Right ventricle myocardium inferior (tissue), 1 donor: ENCODE measurements at regions of chr2 and their contacts with region 1.

Region 1: DNA sequence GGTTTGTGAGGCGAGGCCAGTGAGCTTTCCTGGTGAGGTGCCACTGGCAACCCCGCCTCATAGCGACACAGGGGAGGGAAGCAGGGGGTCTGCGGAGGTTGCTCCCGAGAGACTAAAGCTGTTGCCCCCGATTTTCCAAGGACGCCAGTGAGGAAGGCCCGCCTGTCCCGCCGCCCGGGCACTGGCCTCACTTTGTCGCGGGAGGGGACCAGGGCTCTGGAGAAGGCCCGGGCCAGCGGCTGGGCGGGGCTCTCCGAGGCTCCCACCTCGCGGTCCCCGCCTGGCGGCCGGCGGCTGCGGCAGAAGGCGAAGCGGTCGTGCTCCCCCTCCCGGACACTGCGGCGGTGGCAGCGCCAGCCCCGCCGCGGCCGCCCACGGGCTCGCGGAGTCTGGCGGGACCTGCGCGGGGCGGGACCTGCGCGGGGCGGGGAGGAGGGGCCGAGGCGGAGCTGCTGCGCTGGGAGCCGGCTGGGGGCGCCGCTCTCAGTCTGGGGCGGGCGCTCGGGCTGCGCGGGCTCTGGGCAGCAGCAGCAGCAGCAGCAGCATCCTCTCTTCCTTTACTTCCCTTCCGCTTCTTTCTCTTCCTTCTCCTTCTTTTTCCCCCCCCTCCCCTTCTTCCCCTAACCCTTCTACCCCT is at the start of gene MAP2:
- DNase-seq: peak; percentile 87
- ATAC-seq: peak; percentile 99
- total RNA-seq, gene MAP2: 4.1 TPM

Region 2: DNA sequence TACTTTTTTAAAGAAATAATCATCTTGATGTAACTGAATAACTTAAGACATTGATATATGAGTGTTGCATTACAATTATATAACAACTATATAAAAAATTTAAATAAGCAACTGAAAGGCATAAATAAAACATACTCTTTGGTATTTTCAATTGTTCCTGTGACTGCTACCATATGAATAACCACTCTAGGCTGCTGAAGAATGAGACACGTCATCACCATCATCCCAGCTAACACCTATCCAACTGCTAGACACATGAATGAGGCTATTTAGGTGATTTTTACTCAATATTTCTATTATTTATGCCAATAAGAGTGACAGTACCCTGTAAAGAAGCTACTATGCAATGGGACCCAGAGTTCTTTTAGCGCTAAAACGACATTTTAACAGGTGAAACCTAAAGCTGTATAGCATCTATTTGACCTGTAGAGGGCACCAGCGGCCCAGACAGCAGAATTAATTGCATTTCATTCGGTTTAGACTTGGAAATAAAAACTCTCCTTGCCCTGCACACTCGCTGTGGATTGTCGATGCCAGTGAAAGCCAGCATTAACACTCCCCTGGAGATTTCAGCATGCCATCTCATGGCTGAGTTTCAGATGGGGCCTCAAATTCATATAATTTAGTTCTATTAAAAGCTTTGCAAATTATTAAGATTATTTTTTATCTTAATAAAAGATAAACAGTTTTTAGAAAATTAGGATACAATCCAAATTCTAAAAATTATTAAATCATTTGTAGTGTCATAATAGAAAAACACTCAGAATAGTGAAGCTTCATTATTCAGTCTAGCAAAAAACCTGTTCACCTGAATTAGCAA is 89.3 kb before region 1 on chr2:
- intact Hi-C with region 1: loop called (anchors 2 kb)
- DNase-seq: no peak
- ATAC-seq: no peak

Region 3: DNA sequence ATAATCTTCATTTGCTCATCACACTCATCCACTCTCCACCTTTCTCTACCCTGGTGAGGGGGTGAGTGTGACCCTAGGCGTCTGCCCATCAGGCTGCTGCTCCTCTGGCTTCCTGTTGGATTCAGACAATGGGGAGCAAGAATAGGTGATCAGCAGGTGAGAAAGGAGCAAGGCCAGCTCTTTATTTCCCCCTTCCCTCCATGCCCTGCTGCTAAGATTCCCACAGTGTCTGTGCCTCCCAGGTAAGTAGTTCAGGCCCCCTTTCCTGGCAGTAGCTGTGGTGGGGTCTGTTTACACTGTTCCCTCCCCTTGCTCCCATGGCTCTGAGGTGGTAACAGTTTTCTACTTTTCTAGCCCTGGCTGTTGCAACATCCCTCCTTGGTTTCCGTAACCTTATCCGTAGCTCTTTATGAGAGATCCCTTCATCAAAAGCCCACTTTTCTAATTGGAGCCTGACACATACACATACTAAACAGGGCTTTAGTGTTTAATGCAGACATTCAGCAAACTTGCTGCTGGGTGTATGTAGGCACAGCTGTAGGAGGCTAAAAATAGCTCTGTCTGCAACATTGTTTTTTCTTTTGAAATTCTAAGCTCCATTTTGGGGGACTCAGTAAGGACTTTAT is 27.6 kb after region 1 on chr2:
- intact Hi-C with region 1: no loop called
- DNase-seq: no peak
- ATAC-seq: no peak

Region 4: DNA sequence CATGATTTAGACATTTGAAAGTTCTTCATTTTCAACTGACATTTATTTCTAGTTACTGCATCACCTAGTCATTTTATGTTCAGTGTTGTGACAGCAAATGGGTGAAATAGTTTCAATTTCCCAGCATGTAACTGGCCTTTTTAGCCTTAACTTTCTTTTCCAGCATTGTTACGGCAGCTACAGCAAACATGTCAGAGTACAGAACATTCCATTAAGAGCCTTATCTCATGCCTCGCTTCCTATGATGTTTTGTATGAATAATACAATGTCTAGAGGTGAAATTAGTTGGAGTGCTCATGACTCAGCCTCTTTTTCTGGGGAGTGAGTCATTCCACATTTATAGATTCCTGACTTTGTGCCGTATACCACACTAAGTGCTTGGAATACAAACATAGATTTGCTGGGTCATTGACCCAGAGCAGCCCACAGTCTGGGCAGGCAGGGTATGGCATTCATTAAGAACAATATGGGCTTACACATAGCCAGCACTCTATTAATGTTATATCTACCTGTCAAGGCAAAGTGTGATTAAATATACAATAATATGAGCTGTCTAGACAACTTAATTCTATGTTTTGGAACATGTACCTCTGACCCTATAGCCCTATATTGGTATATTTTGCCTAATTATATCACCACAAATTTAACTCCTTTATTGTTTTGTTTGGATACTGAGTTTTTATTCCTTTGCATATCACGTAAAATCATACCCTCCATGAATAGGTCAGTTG is 72.3 kb after region 1 on chr2:
- intact Hi-C with region 1: no loop called
- DNase-seq: no peak
- ATAC-seq: peak; percentile 86

Region 5: DNA sequence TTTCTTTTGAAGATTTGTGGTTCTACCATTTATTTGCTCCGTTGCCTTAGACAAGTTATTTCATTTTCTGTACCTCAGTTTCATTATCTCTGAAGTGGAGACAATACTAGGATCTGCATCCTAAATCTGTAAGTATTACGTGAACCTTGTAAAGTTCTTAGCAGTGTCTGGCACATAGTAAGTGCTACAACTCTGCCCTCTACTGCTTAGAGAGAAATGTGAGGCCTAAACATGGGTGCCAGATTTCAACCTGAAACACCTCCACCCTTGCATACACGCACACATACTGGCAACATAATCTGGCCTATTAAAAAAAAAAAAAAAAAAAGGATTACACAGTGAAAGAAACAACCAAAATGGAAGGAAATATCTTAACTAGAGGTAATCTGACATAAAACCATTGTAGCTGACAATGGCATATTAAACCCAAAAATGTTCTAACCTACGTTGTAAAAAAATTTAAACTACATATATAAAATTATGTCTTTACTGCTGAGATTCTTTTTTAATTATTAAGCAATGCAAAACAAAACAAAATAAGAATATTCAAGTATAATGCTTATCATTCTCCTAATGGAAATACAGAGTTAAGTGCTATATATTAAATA is 132.8 kb after region 1 on chr2:
- intact Hi-C with region 1: loop called (anchors 2 kb)
- DNase-seq: no peak
- ATAC-seq: no peak

Region 6: DNA sequence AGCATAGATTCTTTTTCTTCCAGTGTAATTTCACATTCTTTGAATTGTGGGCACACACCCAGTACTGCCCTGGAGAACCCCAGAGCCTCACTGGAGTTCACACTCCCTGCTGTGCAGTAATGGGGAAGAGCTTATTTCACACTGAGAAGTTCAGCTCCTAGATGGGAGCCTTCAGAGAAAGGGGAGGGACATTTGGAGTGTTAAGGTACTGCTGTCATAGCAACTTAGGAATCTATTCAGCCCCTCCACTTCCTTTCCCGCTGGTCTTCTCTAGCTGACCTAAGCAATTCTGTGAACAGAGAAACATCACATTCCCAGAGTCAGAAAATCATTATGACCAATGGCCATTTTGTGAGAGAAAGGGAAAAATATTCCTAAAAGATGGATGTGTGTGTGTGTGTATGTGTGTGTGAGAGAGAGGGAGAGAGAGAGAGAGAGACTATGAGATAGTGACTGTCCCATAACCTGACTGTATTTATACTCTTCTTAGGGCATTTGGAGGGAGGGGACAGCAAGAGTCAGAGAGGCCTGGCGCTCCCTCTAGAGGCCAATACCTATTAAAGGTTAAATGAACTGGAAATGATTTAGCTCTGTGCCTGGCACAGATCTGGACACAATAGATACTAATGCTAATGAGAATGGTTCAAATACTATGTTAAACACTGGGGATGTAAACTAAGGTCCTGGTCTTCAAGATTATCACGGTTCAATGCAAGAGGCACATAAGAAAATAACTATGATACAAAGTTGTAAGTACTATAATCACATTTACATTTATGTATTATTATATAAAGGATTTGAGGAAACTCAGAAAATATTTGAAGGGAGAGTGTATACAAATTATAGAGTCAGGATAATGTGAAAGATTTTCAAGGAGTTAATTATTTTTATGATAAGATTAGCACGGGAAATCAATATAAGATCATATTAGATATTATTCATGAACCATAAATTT is 537.3 kb after region 1 on chr2:
- intact Hi-C with region 1: loop called (anchors 10 kb)
- DNase-seq: no peak
- ATAC-seq: peak; percentile 65